Lower lobe of right lung (tissue), 2 donors: ENCODE measurements at regions of chr5 and their contacts with region 1.

Region 1: DNA sequence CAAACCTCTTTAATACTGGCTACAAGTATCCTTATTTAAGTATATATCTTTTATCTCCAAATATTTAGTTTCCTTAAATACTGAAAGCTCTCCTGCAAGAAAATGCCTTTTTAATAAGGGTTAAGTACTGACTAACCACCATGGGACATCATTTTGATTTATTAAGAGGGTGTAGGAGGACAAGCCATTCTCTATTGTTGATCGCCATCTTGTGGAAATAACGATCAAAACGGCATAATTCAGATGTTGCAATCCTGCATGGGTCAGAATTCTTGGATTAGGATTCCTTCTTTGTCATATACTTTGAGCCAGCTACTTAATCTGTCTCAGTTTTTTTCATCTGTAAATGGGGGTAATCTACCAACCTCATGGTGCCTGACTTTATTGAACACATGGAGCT is 28.7 kb upstream of the C5orf46 start:
- DNase-seq: no peak
- ATAC-seq: peak; percentile 60 to 71
- H3K4me3 ChIP-seq: no peak overlapping the region
- H3K27ac ChIP-seq: no peak overlapping the region
- H3K4me1 ChIP-seq: no peaks in the 10 kb centered on the region
- H3K27me3 ChIP-seq: no peaks in the 10 kb centered on the region
- CTCF ChIP-seq: peak; percentile 49

Region 2: DNA sequence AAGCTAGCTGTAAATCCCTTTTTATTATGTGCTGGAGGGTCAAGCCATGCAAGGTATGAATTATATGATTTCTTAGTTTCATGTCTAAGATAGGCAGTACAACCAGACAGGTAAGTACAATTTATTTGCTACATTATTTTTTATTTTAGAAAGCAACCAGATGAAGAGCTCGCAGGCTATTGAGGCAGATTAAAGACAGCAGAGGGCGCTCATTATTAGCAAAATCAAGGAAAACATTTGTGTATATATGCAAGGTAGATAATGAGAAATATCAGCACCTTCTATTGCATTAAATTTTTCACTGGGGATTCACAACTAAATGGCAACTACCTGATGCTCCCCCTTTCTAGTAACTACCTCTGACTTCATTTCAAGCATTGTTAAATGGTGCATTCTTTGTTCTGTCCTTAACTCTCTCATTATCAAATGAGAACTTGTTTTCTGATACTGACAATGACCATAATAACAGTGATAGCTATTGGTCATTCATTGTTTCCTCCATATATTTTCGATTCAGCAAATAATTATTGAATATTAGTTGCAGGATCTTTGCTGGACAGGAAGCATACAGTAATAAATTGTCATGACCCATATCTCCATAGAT is 47.9 kb before region 1 on chr5:
- intact Hi-C with region 1: loop called (anchors 10 kb)
- DNase-seq: no peak
- ATAC-seq: no peak
- H3K4me3 ChIP-seq: no peak overlapping the region
- H3K27ac ChIP-seq: no peak overlapping the region
- H3K4me1 ChIP-seq: no peaks in the 10 kb centered on the region
- H3K27me3 ChIP-seq: no peaks in the 10 kb centered on the region
- CTCF ChIP-seq: peak; percentile 55

Region 3: DNA sequence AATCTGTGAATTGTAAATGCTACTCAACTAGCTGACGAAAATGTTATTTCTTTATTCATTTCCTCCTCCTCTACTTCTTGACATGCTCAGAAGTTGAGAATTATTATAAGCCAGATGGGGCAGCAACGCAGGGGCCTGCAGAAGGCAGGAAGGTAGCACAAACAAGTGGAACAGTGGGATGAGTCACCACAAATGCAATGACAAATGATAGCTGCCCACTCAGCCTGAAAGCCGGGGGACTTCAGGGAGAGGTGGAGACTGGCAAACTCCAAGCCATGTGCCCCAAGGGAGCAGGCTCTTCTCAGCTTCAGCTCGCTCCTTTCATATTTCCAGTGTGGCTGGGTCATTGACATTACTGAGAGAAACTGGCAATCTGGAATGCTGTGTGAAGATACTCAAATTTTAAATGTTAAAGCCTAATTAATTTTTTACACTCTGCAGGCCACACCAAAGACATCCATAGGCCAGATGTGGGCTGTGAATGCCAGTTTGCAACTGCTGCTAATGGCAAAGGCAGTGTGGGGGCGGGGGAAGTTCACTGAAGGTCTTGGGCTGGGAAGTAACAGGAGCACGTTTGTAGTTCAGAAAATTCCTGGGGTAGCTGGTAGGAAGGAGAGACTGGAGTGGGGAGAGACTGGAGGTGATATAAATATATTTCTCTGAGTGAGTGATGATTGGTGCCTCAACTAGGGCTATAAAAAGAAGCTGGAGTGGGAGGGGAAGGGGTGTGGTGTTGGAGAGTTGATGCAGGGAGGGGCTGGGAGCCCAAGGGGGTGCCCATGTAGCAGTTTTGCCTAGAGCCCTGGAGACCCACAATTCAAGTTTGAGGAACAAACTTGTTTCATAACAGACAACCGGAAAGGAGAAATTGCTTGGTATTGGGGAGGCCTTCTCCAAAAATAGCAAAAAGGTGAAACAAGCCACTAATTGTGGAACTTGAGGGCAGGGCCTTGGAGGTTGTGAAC is 870.6 kb after region 1 on chr5:
- intact Hi-C with region 1: no loop called
- DNase-seq: peak; percentile 70
- ATAC-seq: peak; percentile 15 to 59
- H3K4me3 ChIP-seq: no peak overlapping the region
- H3K27ac ChIP-seq: no peak overlapping the region
- H3K4me1 ChIP-seq: peaks cover 53% of the 10 kb centered on the region
- H3K27me3 ChIP-seq: no peaks in the 10 kb centered on the region
- CTCF ChIP-seq: no peak